GM12878 (cell line): ENCODE measurements at regions of chr14 and their contacts with region 1.

Region 1: GRCh38 chr14:23006544-23007419 is 3.2 kb downstream of the C14orf93 start:
- DNase-seq: peak; percentile 96
- ATAC-seq: peak; percentile 98
- H3K4me3 ChIP-seq: peak overlapping the region; percentile 71
- H3K27ac ChIP-seq: peak overlapping the region; percentile 91
- H3K4me1 ChIP-seq: peaks cover 21% of the 10 kb centered on the region
- H3K27me3 ChIP-seq: no peaks in the 10 kb centered on the region
- CTCF ChIP-seq: peak in 2 of 3 experiments; percentile 26 to 30; a peak in 3 of 6 replicates
- EP300 ChIP-seq: no peak
- POLR2A ChIP-seq: peak; percentile 99
- RAD21 ChIP-seq: no peak

Region 2: GRCh38 chr14:22918804-22919600 is 87.8 kb before region 1 on chr14 and contains the start of gene RBM23:
- CTCF ChIA-PET with region 1: interaction called, 3 read pairs
- POLR2A ChIA-PET with region 1: no interaction called
- RAD21 ChIA-PET with region 1: interaction called, 10 read pairs
- SMC1A ChIA-PET with region 1: no interaction called
- in situ Hi-C with region 1: no loop called
- intact Hi-C with region 1: no loop called
- DNase-seq: peak; percentile 100
- ATAC-seq: peak; percentile 98
- H3K4me3 ChIP-seq: peak within 1 kb of the TSS; percentile 96
- H3K27ac ChIP-seq: peak within 1 kb of the TSS; percentile 97
- H3K4me1 ChIP-seq: peaks cover 8% of the 10 kb centered on the region
- H3K27me3 ChIP-seq: no peaks in the 10 kb centered on the region
- CTCF ChIP-seq: no peak
- EP300 ChIP-seq: no peak
- POLR2A ChIP-seq: peak; percentile 87
- RAD21 ChIP-seq: no peak
- polyA plus RNA-seq, gene RBM23: 60.7 to 65.7 TPM

Region 3: DNA sequence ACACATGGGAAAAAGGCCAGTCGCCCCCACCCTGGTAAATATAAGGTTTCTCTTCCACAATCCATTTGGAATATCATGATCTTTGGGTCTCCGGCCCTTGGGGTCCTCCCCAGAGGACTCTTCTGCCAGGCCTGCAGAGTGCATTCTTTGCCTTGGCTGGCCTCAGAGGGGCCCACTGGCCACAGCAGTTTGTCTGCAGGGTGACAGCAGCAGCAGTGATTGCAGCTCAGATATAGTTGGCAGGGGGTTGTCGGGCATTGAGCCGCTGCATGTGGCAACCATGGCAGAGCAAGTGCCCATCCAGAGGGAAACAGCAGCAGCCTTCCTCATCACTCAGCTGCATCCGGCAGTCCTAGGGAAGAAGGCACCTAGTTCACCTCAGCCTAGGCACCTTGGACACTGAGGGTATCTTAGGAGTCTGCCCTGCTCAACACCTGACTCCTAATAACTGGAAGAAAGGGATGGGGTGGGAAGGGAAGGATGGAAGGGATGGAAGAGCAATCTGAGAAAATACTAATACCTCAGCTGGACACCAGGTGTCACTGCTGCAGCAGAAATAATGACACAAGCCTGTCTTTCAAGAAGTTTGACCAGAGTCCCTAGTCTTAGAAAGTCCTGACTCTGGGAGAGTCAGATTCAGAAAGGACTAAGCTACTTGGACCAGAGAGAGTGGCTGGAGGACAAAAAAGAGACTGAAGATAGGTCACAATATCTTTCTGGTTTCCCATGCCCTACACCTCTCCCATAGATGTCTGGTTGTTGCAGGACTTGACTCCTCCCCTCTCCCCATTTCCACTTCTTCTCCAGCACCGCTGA is 33.4 kb before region 1 on chr14:
- CTCF ChIA-PET with region 1: interaction called, 19 read pairs
- POLR2A ChIA-PET with region 1: interaction called, 7 read pairs
- RAD21 ChIA-PET with region 1: interaction called, 12 read pairs
- SMC1A ChIA-PET with region 1: interaction called, 4 read pairs
- in situ Hi-C with region 1: no loop called
- intact Hi-C with region 1: no loop called
- DNase-seq: no peak
- ATAC-seq: peak; percentile 85
- H3K4me3 ChIP-seq: no peak overlapping the region
- H3K27ac ChIP-seq: no peak overlapping the region
- H3K4me1 ChIP-seq: no peaks in the 10 kb centered on the region
- H3K27me3 ChIP-seq: no peaks in the 10 kb centered on the region
- CTCF ChIP-seq: peak; percentile 65 to 82 (median 70)
- EP300 ChIP-seq: no peak
- POLR2A ChIP-seq: no peak
- RAD21 ChIP-seq: peak; percentile 61

Region 4: GRCh38 chr14:23034483-23035302 is 27.9 kb after region 1 on chr14 and contains the start of gene PSMB5:
- CTCF ChIA-PET with region 1: interaction called, 16 read pairs
- POLR2A ChIA-PET with region 1: interaction called, 15 read pairs
- RAD21 ChIA-PET with region 1: interaction called, 13 read pairs
- SMC1A ChIA-PET with region 1: interaction called, 10 read pairs
- in situ Hi-C with region 1: no loop called
- intact Hi-C with region 1: no loop called
- DNase-seq: peak; percentile 98
- ATAC-seq: peak; percentile 98
- H3K4me3 ChIP-seq: peak within 1 kb of the TSS; percentile 83
- H3K27ac ChIP-seq: peak within 1 kb of the TSS; percentile 92
- H3K4me1 ChIP-seq: peaks cover 6% of the 10 kb centered on the region
- H3K27me3 ChIP-seq: no peaks in the 10 kb centered on the region
- CTCF ChIP-seq: no peak
- EP300 ChIP-seq: no peak
- POLR2A ChIP-seq: peak; percentile 91
- RAD21 ChIP-seq: no peak
- polyA plus RNA-seq, gene PSMB5: 686 to 802 TPM

Region 5: DNA sequence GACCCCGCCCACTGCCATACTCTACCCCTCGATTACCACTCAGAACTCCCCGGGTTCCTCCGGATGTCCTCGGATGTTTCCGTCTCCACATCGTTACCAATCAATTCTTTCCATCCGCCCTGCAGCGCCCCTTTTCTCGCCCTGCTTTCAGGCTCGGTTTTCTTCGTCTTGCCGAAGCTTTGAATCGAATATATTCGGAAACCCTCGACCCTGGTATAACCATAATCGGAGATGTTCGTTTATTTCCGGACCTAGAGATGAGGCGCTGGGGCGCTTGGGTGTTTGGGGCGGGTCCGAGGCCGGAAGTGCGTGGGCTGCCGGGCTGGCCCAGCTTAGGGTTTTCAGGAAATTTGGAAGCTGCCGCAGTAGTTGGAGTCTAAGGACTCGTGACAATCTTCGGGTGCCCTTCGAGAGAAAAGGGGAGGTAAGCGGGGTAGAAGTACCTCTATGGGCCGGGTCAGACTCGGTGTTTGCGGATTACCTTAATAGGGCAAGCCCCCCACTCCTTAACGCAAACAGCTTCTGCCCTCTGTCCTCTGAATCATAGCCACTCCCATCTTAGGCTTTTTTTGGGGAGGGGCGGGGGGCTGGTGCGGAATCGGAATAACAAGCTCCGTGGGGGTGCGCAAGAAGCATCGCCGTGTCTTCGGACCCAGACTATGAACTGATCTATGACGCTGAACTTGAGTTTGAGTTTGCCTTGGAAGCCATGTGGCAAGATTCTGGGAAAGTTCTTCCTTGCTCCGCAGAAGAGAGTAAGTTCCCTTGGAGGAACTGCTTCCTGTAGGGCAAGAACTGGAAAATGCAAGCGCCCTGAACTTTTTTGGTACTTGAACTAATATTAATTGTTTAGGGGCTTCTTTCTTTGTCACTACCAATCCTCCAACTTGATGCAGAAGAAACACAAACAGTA is 88.7 kb after region 1 on chr14 and contains the start of gene C14orf119:
- CTCF ChIA-PET with region 1: interaction called, 5 read pairs
- POLR2A ChIA-PET with region 1: interaction called, 12 read pairs
- RAD21 ChIA-PET with region 1: interaction called, 6 read pairs
- SMC1A ChIA-PET with region 1: interaction called, 5 read pairs
- in situ Hi-C with region 1: no loop called
- intact Hi-C with region 1: no loop called
- DNase-seq: peak; percentile 99
- ATAC-seq: peak; percentile 93
- H3K4me3 ChIP-seq: peak within 1 kb of the TSS; percentile 92
- H3K27ac ChIP-seq: peak within 1 kb of the TSS; percentile 99
- H3K4me1 ChIP-seq: peaks cover 3% of the 10 kb centered on the region; the same call in 1 of the 2 replicates
- H3K27me3 ChIP-seq: no peaks in the 10 kb centered on the region
- CTCF ChIP-seq: no peak
- EP300 ChIP-seq: no peak
- POLR2A ChIP-seq: peak; percentile 61; the same call in 1 of the 2 replicates
- RAD21 ChIP-seq: no peak
- polyA plus RNA-seq, gene C14orf119: 166 to 228 TPM